Activated B cell treated with CpG ODN at 0.5 μM for 24 hours (primary cell): ENCODE measurements at regions of chr7 and their contacts with region 1.

Region 1: GRCh38 chr7:89908736-89909135 is 245.5 kb upstream of the STEAP1 start:
- DNase-seq: no peak
- ATAC-seq: no peak
- H3K4me3 Mint-ChIP-seq: no peak overlapping the region
- H3K27ac Mint-ChIP-seq: no peak overlapping the region
- H3K4me1 Mint-ChIP-seq: no peaks in the 10 kb centered on the region
- H3K27me3 Mint-ChIP-seq: no peaks in the 10 kb centered on the region
- CTCF ChIP-seq: no peak

Region 2: GRCh38 chr7:89887489-89887888 is 21.2 kb before region 1 on chr7:
- CTCF ChIA-PET with region 1: no interaction called
- POLR2A ChIA-PET with region 1: no interaction called
- intact Hi-C with region 1: loop called (anchors 1 kb)
- DNase-seq: no peak
- ATAC-seq: no peak
- H3K4me3 Mint-ChIP-seq: no peak overlapping the region
- H3K27ac Mint-ChIP-seq: no peak overlapping the region
- H3K4me1 Mint-ChIP-seq: no peaks in the 10 kb centered on the region
- H3K27me3 Mint-ChIP-seq: no peaks in the 10 kb centered on the region
- CTCF ChIP-seq: no peak